A549 (cell line): ENCODE measurements at regions of chr17 and their contacts with region 1.

Region 1: GRCh38 chr17:35119368-35120165 is at the start of gene RAD51D:
- DNase-seq: peak; percentile 81 to 83
- ATAC-seq: peak; percentile 85 to 92
- H3K4me3 ChIP-seq: peak within 1 kb of the TSS; percentile 71
- H3K27ac ChIP-seq: peak within 1 kb of the TSS; percentile 91 to 94
- H3K4me1 ChIP-seq: peaks cover 27% of the 10 kb centered on the region
- CTCF ChIP-seq: peak; percentile 98
- EP300 ChIP-seq: no peak
- POLR2A ChIP-seq: peak; percentile 52; the same call in 1 of the 2 replicates
- RAD21 ChIP-seq: peak; percentile 86 to 100
- polyA plus RNA-seq, gene RAD51D: 18.4 and 21.0 TPM in 2 replicates

Region 2: GRCh38 chr17:34443619-34444469 is 675.7 kb before region 1 on chr17:
- CTCF ChIA-PET with region 1: interaction called, 33 read pairs
- POLR2A ChIA-PET with region 1: no interaction called
- DNase-seq: peak; percentile 43 to 48
- ATAC-seq: peak; percentile 77 to 90
- H3K4me3 ChIP-seq: no peak overlapping the region
- H3K27ac ChIP-seq: no peak overlapping the region
- H3K4me1 ChIP-seq: no peaks in the 10 kb centered on the region
- CTCF ChIP-seq: peak; percentile 45
- EP300 ChIP-seq: no peak
- POLR2A ChIP-seq: no peak
- RAD21 ChIP-seq: peak; percentile 70 to 80

Region 3: GRCh38 chr17:34980681-34981537 is 138.7 kb before region 1 on chr17:
- CTCF ChIA-PET with region 1: interaction called, 43 read pairs
- POLR2A ChIA-PET with region 1: interaction called, 3 read pairs
- DNase-seq: peak; percentile 86 to 93
- ATAC-seq: peak; percentile 91 to 94
- H3K4me3 ChIP-seq: peak overlapping the region; percentile 78
- H3K27ac ChIP-seq: peak overlapping the region; percentile 94 to 97
- H3K4me1 ChIP-seq: peaks cover 14% of the 10 kb centered on the region
- CTCF ChIP-seq: peak; percentile 55
- EP300 ChIP-seq: peak in 1 of 2 experiments; percentile 18; a peak in 1 of 5 replicates
- POLR2A ChIP-seq: peak; percentile 37
- RAD21 ChIP-seq: peak; percentile 52 to 56; a peak in 4 of 5 replicates

Region 4: GRCh38 chr17:35011671-35012210 is 107.8 kb before region 1 on chr17:
- CTCF ChIA-PET with region 1: interaction called, 28 read pairs
- POLR2A ChIA-PET with region 1: no interaction called
- DNase-seq: no peak
- ATAC-seq: no peak
- H3K4me3 ChIP-seq: no peak overlapping the region
- H3K27ac ChIP-seq: no peak overlapping the region
- H3K4me1 ChIP-seq: no peaks in the 10 kb centered on the region
- CTCF ChIP-seq: no peak
- EP300 ChIP-seq: no peak
- POLR2A ChIP-seq: no peak
- RAD21 ChIP-seq: no peak

Region 5: GRCh38 chr17:35088881-35089585 is 30.5 kb before region 1 on chr17:
- CTCF ChIA-PET with region 1: interaction called, 60 read pairs
- POLR2A ChIA-PET with region 1: interaction called, 9 read pairs
- DNase-seq: peak in 1 of 2 experiments; percentile 86
- ATAC-seq: peak; percentile 70 to 87
- H3K4me3 ChIP-seq: peak overlapping the region; percentile 90
- H3K27ac ChIP-seq: peak overlapping the region; percentile 96
- H3K4me1 ChIP-seq: peaks cover 42% of the 10 kb centered on the region
- CTCF ChIP-seq: peak; percentile 98
- EP300 ChIP-seq: no peak
- POLR2A ChIP-seq: no peak
- RAD21 ChIP-seq: peak; percentile 59 to 82

Region 6: GRCh38 chr17:35141681-35142466 is 22.3 kb after region 1 on chr17 and contains the start of gene NLE1:
- CTCF ChIA-PET with region 1: interaction called, 27 read pairs
- POLR2A ChIA-PET with region 1: no interaction called
- DNase-seq: peak; percentile 86 to 93
- ATAC-seq: peak; percentile 96 to 97
- H3K4me3 ChIP-seq: peak within 1 kb of the TSS; percentile 87
- H3K27ac ChIP-seq: peak within 1 kb of the TSS; percentile 84 to 93
- H3K4me1 ChIP-seq: peaks cover 9% of the 10 kb centered on the region; the same call in 2 of the 3 replicates
- CTCF ChIP-seq: peak; percentile 90
- EP300 ChIP-seq: no peak
- POLR2A ChIP-seq: peak; percentile 87
- RAD21 ChIP-seq: peak; percentile 30 to 48
- polyA plus RNA-seq, gene NLE1: 19.3 and 20.9 TPM in 2 replicates

Region 7: DNA sequence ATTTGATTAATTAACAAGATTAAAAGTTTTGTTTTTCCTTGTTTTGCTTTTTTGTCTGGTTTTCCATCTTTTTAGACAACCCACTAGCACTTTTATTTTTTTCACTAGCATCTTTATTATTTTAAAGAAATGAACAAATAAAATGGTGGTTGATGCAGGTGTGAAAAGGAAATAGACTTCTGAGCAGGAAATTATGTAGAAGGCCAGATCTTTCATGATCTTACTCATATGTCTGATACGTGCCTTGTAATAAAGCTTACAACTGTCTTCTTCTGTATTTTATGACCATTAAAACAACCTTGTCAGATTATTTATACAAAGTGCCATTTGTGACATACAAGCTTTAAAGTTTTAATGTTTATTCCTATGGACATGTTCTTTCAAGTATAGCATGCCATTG is 411.6 kb after region 1 on chr17:
- CTCF ChIA-PET with region 1: no interaction called
- POLR2A ChIA-PET with region 1: no interaction called
- DNase-seq: no peak
- ATAC-seq: no peak
- H3K4me3 ChIP-seq: no peak overlapping the region
- H3K27ac ChIP-seq: no peak overlapping the region
- H3K4me1 ChIP-seq: no peaks in the 10 kb centered on the region
- CTCF ChIP-seq: no peak
- EP300 ChIP-seq: no peak
- POLR2A ChIP-seq: no peak
- RAD21 ChIP-seq: no peak